Left colon (tissue), 2 donors: ENCODE measurements at regions of chr1 and their contacts with region 1.

Region 1: DNA sequence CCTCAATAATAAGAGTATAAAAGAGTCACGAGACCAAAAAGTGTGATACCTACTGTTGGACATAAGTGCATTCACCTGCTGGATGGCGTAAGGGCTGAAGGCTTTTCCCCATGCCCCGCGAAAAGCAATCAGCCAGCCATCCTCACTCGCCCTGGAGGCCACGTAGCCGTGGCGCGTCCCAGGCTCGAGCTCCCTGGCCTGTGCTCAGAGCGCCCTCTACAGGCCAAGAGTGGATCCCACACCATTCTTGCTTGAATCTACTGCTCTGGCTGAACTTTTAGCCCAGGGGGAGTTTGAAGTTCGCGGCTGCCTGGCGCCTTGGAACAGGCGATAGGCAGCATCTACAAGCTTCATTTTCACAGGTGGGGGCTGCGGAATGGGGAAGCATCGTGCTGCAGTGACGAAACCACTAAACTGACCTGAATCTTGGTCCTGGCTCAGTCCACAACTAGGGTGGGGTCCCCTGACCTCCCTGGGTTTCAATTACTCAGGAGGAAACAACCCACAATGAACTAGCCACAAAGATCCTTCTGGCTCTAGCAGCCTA is 70.3 kb upstream of the SERBP1 start:
- DNase-seq: peak; percentile 68 to 88
- ATAC-seq: peak; percentile 100

Region 2: DNA sequence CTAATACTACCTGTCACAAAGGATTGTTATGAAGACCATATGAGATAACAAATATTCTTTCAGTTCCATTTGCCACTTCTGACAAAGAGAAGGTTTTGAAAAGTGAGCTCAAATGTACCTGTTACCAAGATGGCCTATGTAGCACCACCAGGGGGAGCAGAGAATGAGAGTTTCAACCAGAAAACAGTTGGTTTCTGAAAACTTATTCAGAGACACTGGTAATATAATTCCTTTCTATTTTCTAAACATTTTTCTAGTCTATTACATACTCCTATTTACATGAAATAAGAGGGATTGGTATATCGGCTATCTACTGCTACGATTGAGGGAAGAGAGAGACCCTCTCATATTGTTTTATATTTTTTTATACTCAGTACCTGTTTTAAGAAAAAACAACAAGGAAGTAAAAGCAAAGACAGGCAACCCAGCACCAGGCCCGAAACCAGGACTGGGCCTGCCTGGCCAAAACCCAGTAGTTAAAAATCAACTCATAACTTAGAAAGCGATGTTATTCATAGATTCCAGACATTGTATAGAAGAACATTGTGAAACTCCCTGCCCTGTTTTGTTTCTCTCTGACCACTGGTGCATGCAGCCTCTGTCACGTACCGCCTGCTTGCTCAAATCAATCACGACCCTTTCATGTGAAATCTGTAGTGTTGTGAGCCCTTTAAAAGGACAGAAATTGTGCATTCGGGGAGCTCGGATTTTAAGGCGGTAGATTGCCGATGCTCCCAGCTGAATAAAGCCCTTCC is 285.9 kb before region 1 on chr1:
- intact Hi-C with region 1: loop called in 1 of 2 experiments (anchors 10 kb)
- DNase-seq: peak in 1 of 2 donors; percentile 39
- ATAC-seq: no peak

Region 3: GRCh38 chr1:67347688-67348472 is 152.6 kb before region 1 on chr1:
- intact Hi-C with region 1: loop called (anchors 5 to 10 kb)
- DNase-seq: peak in 1 of 2 donors; percentile 24
- ATAC-seq: peak; percentile 76

Region 4: DNA sequence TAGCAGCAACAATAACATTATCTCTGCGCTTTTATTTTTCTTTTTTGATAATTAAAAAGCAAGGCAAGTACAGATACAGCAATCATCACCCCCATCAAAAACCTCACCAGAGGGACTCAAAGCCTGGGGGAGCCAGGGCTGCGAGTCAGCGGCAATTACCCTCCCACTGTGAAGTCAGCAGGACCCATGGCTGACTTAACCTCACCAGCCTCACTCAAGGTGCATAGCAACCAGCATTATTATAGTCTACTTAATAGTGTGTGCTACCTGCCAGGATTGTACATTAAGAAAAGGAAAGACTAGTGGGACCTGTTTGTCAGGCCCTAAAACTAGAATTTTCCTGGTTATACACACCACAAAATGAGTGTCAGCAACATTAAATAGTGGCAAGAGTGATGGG is 41.4 kb before region 1 on chr1:
- intact Hi-C with region 1: no loop called
- DNase-seq: no peak
- ATAC-seq: no peak